Right lobe of liver (tissue), 6 donors: ENCODE measurements at regions of chr10 and their contacts with region 1.

Region 1: GRCh38 chr10:6088721-6089390 is at the start of gene RBM17:
- DNase-seq: peak; percentile 96
- ATAC-seq: peak; percentile 89 to 96 (median 96)
- H3K4me3 ChIP-seq: peak within 1 kb of the TSS; percentile 81 to 90 (median 87)
- H3K27ac ChIP-seq: peak within 1 kb of the TSS; percentile 77 to 88 (median 87)
- H3K4me1 ChIP-seq: peaks cover 0 to 9% (median 4%) of the 10 kb centered on the region in 4 donors
- H3K27me3 ChIP-seq: no peaks in the 10 kb centered on the region
- CTCF ChIP-seq: peak; percentile 100
- POLR2A ChIP-seq: peak; percentile 86
- total RNA-seq, gene RBM17: 11.9 to 40.6 (median 28.1) TPM

Region 2: GRCh38 chr10:6009150-6009549 is 79.7 kb before region 1 on chr10:
- intact Hi-C with region 1: loop called in 1 of 2 experiments (anchors 10 kb)
- DNase-seq: no peak
- ATAC-seq: peak in 3 of 4 donors; percentile 30 to 84 (median 65)
- H3K4me3 ChIP-seq: no peak overlapping the region
- H3K27ac ChIP-seq: peak overlapping the region in 1 of 3 donors; percentile 36
- H3K4me1 ChIP-seq: peaks cover 0 to 5% (median 0%) of the 10 kb centered on the region in 4 donors
- H3K27me3 ChIP-seq: no peaks in the 10 kb centered on the region
- CTCF ChIP-seq: no peak
- POLR2A ChIP-seq: no peak